ENCODE measurements at regions of chr6 and their contacts with region 1.

Region 1: DNA sequence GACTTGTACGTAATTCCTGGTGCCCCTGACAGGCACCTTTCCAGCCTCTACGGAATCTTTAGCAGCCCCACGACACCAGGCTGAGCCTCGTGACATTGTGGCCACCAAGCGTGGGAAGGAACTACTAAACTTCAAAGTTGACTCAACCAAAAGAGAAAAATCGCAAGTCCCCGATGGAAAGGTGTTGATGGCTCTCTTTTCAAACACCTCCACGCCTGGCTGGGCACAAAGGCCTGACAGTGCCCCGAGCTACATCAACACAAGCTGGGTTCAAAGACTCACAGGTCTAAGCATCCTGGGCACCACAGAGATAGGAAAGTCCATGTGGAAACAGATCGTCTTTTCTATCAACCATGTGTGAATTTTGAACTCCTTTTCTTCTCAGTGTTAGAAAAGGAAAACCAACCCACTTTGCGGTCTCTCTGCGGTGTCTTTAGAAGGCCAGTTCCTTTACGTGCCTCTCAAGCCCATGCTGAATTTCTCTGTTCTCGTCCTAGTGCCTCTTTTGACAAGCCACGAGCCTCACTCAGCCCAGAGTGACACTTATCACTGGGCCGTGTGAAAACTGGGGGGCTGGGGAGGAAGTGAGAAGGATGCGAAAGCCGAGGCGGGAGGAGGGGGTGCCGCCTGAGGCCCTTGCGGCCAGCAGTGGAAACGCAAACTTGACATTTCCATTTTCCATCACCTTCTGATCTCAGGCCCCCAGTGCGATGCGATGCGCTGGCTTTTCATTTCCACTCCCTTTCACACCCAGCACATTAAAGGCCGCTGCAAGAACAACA is 59.4 kb downstream of the GFOD1 start:
- DNase-seq: peak; percentile 57
- H3K4me3 Mint-ChIP-seq: peak overlapping the region; percentile 54
- H3K27ac Mint-ChIP-seq: peak overlapping the region; percentile 95
- H3K4me1 Mint-ChIP-seq: peaks cover 78% of the 10 kb centered on the region
- H3K27me3 Mint-ChIP-seq: no peaks in the 10 kb centered on the region

Region 2: GRCh38 chr6:13272131-13273046 is 155.6 kb before region 1 on chr6:
- intact Hi-C with region 1: loop called (anchors 5 kb)
- DNase-seq: no peak
- H3K4me3 Mint-ChIP-seq: no peak overlapping the region
- H3K27ac Mint-ChIP-seq: no peak overlapping the region
- H3K4me1 Mint-ChIP-seq: peaks cover 24% of the 10 kb centered on the region
- H3K27me3 Mint-ChIP-seq: peaks cover 7% of the 10 kb centered on the region

Region 3: DNA sequence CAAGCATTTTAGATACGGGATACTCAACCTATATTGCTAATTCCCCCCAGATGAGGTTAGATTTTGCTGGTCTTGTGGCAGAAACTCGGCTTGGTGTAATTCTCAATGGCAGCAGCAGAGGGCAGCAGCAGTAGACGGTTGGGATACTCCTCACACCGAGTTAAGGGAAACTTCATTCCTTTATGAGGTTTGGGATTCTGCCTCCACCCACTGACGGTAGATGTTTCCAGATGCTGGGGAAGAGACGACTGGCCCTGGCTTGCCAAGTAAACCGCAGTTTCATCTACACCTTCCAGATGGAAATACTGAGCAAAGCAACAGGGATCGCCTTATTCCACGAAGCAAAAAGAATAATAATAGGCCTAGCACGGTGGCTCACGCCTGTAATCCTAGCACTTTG is 91.4 kb before region 1 on chr6:
- intact Hi-C with region 1: loop called (anchors 1 kb)
- DNase-seq: peak; percentile 60
- H3K4me3 Mint-ChIP-seq: no peak overlapping the region
- H3K27ac Mint-ChIP-seq: no peak overlapping the region
- H3K4me1 Mint-ChIP-seq: peaks cover 43% of the 10 kb centered on the region
- H3K27me3 Mint-ChIP-seq: peaks cover 9% of the 10 kb centered on the region

Region 4: GRCh38 chr6:13375360-13375878 is 52.6 kb before region 1 on chr6:
- intact Hi-C with region 1: loop called (anchors 1 kb)
- DNase-seq: no peak
- H3K4me3 Mint-ChIP-seq: no peak overlapping the region
- H3K27ac Mint-ChIP-seq: peak overlapping the region; percentile 23
- H3K4me1 Mint-ChIP-seq: peaks cover 39% of the 10 kb centered on the region
- H3K27me3 Mint-ChIP-seq: no peaks in the 10 kb centered on the region

Region 5: GRCh38 chr6:13454286-13455221 is 26.6 kb after region 1 on chr6:
- intact Hi-C with region 1: loop called (anchors 1 kb)
- DNase-seq: peak; percentile 55
- H3K4me3 Mint-ChIP-seq: peak overlapping the region; percentile 27
- H3K27ac Mint-ChIP-seq: peak overlapping the region; percentile 88
- H3K4me1 Mint-ChIP-seq: peaks cover 55% of the 10 kb centered on the region
- H3K27me3 Mint-ChIP-seq: peaks cover 1% of the 10 kb centered on the region

Region 6: DNA sequence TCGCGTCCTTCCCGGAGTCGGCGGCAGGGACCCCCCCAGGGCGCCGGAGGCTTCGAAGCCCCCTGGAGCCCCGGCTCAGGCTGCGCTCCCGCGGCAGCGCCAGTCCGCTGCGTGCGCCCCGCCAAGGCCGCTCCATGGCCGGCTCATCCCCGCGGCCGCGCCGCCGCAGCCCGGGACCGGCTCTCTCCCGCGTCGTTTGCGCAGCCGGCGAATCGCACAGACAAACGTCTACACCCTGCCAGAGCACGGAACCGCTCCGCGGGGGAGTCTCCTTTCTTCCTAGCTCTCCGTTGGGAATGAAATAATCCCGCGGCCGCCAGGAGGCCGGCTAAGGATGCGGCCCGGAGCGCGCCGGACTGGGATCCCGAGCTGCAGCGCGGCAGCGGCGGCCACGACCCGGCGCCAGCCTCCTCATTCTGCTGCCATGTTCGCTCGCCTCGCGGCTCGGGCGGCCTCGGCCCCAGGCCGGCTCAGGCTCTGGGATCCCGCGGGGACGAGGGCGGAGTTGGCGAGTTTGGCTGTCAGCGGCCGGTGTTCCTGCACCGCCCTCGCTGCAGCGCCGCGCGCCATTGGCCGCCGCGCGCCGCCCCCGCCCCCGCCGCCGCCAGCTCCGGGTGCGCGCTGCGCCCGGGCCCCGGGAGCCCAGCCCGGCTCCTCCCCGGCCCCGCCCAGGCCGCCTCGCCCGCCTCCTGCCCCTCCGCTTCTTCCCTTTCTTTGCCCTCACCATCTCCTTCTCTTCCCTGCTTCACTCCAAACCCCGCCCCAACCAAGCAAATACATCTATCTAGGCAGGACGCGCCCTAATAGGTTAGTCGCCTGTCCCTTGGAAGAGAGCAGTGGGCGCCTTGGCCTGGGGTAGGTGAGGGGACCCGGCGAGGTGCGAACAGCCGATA is 59.4 kb after region 1 on chr6 and contains the start of gene GFOD1:
- intact Hi-C with region 1: loop called (anchors 1 kb)
- DNase-seq: peak; percentile 80
- H3K4me3 Mint-ChIP-seq: peak within 1 kb of the TSS; percentile 89
- H3K27ac Mint-ChIP-seq: peak within 1 kb of the TSS; percentile 72
- H3K4me1 Mint-ChIP-seq: peaks cover 39% of the 10 kb centered on the region
- H3K27me3 Mint-ChIP-seq: peaks cover 10% of the 10 kb centered on the region
- total RNA-seq, gene GFOD1: 12.4 and 13.6 TPM in 2 replicates

Region 7: GRCh38 chr6:13762611-13763441 is 334.8 kb after region 1 on chr6:
- intact Hi-C with region 1: loop called (anchors 1 kb)
- DNase-seq: peak; percentile 34
- H3K4me3 Mint-ChIP-seq: peak overlapping the region; percentile 75
- H3K27ac Mint-ChIP-seq: peak overlapping the region; percentile 92
- H3K4me1 Mint-ChIP-seq: peaks cover 52% of the 10 kb centered on the region
- H3K27me3 Mint-ChIP-seq: peaks cover 2% of the 10 kb centered on the region

Measured in activated T-helper 1 cell treated with anti-CD3 and anti-CD28 coated beads, Interleukin-12 subunit alpha, Interleukin-12 subunit beta, Interleukin-2, Interleukin-4 antibody, amounts not matched to agents 30 ng/mL and 10 ng/mL and 1 ng/mL, durations not matched to agents 14 hours and 24 hours and 36 hours (primary cell).